HEK293T (cell line): ENCODE measurements at regions of chr2 and their contacts with region 1.

Region 1: DNA sequence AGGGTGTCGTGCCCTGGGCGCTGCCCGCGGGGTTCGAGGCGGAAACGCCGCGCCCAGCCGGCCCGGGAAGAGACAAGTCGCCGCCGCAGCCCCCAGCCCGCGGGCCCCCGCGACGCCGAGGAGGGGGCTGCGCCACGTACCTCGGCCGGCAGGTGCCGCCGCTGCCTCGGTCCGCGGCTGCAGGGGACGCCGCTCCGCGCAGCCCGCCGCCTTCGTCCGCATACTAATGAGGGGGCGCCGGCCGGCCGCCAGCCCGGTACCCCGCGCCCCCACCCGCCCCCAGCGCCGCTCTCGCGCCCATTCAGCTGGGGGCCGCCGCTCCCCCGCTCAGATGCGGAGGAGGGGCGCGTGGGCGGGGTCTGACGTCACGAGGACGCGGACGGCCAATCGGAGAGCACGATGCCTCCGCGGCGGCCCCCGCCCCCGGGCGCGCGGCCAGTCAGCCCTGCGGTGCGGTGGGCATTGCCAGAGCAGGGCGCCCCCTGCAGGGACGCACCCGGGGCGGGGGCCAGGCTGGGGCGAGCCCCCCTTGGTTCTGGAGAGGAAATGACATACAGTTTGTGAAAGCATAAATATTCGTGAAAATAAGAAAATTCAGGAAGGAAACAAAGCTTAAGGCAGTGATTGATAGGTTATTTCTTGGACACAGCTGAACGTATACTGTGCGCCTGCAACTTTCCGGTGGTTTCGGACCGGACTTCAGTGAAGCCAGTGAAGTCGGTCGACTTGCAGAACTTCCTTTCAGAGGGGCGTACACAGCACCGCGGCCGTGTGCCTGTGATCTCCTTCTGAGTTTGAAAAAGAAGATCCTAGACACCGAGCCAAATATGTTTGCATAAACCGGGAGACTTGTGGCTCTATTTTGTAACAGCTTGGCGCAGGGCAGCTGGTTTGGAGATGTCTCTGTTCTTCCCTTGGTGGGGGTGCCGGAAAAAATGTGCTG is at the start of gene ST3GAL5:
- DNase-seq: peak; percentile 94

Region 2: DNA sequence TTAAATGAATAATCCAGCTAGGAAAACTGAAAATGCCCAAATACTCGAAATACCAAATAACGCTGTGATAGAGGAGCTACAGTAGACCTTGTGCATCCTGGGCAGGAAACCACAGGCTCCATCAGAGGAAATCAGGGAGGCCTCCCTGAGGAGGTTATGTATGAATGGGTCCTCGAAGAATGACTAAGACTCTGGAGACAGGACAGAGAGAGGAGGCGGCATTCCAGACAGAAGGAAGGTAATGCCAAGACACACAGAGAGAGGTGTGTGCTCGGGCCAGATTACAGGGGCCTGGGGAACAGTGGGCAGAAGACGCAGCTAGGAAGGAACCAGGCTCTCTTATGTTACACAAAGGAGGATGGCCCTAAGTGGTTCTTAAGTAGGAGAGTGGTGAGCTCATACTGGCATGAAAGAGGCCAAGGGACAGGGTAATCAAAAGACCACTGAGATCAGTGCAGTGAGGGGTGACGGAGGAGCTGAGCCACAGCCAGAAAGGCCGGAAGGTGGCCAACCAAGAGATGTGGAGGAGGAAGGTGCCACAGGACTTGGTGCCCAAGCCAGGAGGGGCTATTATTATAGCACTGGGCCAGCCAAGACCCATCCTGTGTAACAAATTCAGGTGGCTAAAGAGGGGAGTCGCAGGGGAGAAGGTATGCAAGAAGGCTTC is 10.1 kb before region 1 on chr2:
- CTCF ChIA-PET with region 1: interaction called, 10 read pairs
- POLR2A ChIA-PET with region 1: interaction called, 3 read pairs
- DNase-seq: no peak

Region 3: DNA sequence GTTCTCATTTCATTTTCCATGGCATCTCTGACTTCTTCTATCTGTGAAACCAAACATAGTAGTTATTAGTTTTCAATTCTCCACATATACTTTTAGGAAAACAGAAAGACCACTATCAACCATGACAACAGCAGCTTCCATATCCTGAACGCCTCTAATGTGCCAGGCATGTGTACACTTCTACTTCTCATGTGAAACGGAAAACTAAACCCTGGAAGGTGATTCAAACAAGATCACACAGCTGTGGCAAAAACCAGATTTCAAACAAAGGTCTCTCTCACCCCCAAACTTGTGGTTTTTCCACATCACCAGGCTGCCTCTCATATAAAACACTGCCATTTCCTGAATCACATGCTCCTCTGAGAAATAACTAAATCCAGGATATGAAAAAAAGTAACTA is 258.8 kb after region 1 on chr2:
- CTCF ChIA-PET with region 1: no interaction called
- POLR2A ChIA-PET with region 1: no interaction called
- DNase-seq: no peak